Left lung (tissue), 14 donors: ENCODE measurements at regions of chr2 and their contacts with region 1.

Region 1: DNA sequence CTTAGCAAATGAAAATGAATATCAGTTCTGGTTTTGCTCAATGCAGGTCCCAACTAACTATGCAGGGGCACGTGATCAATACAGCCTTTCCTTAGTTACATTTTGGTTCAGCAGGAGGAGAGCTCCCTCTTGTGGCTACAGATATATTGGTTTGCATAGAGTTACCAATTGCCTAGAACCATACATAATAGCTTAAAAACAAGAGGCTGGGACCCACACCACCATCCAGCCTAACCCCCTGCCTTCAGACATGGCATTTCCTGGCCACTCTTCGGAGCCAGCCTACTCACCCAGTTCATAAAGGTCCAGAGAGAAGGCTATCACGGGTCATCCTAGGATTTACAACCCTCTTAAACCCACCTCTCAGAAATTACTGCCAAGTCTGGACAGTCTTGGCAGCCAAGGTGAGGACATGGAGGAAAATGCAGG is 10.5 kb downstream of the CCDC93 start:
- DNase-seq: peak in 2 of 4 donors; percentile 71 to 81
- ATAC-seq: peak; percentile 99
- H3K4me3 ChIP-seq: no peak overlapping the region
- H3K27ac ChIP-seq: no peak overlapping the region
- H3K4me1 ChIP-seq: peaks cover 0 to 11% of the 10 kb centered on the region in 2 donors
- H3K27me3 ChIP-seq: no peaks in the 10 kb centered on the region
- CTCF ChIP-seq: peak; percentile 82 to 83

Region 2: DNA sequence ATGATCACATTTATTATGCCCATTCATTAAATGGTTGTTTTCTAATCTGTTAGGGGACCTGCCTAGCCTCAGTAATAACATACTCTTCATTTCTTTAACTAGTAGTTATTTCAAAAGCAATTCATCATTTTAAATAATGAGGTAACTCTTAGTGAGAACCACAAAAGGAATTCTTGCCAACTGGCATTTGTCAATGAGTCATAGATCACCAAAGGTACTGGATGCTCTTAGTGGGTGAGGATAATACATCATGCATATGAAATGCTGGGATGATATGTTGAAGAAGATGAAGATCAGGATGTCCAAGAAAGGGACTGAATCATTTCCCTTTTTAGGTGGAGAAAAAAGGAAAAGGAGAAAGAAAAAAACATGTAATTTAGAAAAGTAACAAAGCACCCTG is 1015.1 kb before region 1 on chr2:
- intact Hi-C with region 1: no loop called
- DNase-seq: no peak
- ATAC-seq: no peak
- H3K4me3 ChIP-seq: no peak overlapping the region
- H3K27ac ChIP-seq: no peak overlapping the region
- H3K4me1 ChIP-seq: no peaks in the 10 kb centered on the region
- H3K27me3 ChIP-seq: no peaks in the 10 kb centered on the region
- CTCF ChIP-seq: no peak

Region 3: GRCh38 chr2:117835990-117836760 is 167.2 kb before region 1 on chr2:
- intact Hi-C with region 1: loop called (anchors 5 to 10 kb)
- DNase-seq: peak; percentile 79 to 92 (median 86)
- ATAC-seq: peak; percentile 99
- H3K4me3 ChIP-seq: peak overlapping the region; percentile 28
- H3K27ac ChIP-seq: no peak overlapping the region
- H3K4me1 ChIP-seq: peaks cover 0 to 8% of the 10 kb centered on the region in 2 donors
- H3K27me3 ChIP-seq: peaks cover 0 to 9% of the 10 kb centered on the region in 2 donors
- CTCF ChIP-seq: peak; percentile 75 to 81

Region 4: GRCh38 chr2:117850015-117850414 is 153.4 kb before region 1 on chr2:
- intact Hi-C with region 1: no loop called
- DNase-seq: no peak
- ATAC-seq: no peak
- H3K4me3 ChIP-seq: no peak overlapping the region
- H3K27ac ChIP-seq: no peak overlapping the region
- H3K4me1 ChIP-seq: no peaks in the 10 kb centered on the region
- H3K27me3 ChIP-seq: peaks cover 0 to 71% of the 10 kb centered on the region in 2 donors
- CTCF ChIP-seq: no peak

Region 5: DNA sequence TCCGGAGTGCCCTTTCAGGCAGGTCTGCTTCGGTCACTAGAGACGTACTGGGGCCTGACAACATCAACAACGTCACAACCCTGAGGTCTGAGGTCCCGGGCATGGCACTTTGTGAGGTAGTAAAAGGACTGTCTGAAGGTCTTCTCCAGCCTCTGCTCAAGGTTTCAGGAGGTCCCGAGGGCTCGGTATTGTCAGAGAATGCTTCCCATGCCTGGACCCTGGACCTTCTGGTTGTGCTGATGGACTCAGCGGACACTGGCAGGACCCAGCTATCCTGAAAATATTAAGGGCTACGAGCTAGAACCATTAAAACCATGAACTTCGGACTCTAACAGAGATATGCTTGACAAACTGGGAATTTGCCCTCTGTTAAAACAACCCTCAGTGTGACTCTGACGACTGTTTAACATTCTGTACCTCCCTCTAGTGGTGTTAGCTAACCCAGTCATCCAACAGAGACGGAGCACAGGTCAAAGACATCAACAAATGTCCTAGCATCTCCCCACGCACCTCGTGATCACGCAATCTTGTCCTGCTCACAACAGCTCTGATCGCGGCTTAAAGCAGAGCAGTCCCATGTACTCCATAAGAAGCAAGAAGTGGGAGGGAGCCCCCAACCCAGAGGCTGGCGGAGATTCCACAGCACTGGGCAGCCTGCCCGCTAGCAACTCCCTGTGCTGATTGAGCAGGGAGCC is 86.0 kb before region 1 on chr2:
- intact Hi-C with region 1: no loop called
- DNase-seq: no peak
- ATAC-seq: no peak
- H3K4me3 ChIP-seq: no peak overlapping the region
- H3K27ac ChIP-seq: no peak overlapping the region
- H3K4me1 ChIP-seq: no peaks in the 10 kb centered on the region
- H3K27me3 ChIP-seq: no peaks in the 10 kb centered on the region
- CTCF ChIP-seq: no peak